ENCODE measurements at regions of chr19 and their contacts with region 1.

Region 1: DNA sequence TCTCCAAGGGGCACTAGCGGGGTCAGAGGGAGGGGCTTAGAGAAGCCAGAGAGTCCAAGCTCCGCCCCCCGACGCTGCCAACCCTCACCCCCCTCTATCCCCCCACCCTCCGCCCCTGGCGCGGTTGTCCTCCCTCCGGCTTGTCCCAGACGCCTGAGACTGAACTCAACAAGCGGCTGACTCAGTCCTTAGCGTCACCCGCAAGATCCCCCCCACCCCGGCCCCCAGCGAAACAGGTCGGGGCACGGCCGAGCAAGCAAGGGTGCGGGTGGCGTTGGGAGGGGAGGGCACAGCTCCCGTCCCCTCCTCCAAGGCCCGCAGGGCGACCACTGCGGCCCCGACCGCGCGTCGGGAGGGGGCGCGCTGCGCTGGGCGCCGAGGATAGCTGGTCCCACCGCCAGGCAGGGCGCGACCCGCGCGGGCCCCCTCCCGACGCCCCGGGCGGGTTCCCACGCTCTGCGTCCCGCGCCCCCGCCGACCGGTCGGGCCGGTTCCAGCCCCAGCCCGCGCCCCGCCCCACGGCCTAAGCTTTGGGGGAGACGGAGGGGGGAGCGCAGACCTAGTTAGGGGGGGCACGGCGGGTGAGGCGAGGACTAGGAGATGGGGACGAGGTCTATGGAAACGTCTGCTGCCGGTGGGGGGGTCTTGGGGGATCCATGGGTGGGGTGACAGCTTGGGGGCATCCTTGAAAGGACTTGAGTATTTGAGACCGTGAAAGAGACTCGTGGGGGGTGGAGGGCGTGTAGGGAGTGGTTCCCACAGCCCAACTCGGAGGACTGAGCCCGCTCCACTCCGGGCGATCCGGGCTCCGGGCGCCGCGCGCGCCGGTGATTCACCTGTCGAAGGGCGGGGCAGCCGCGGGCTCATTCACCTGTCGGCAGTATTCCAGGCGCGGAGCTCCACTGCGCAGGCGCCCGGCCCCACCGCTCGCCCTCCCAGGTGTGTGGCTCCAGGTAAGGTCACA is 5.1 kb downstream of the NOTCH3 start:
- DNase-seq: peak; percentile 92 to 98
- H3K4me3 ChIP-seq: peak overlapping the region; percentile 57
- H3K27ac ChIP-seq: peak overlapping the region; percentile 82
- H3K4me1 ChIP-seq: peaks cover 43% of the 10 kb centered on the region
- H3K27me3 ChIP-seq: no peaks in the 10 kb centered on the region
- CTCF ChIP-seq: peak; percentile 35; the same call in 1 of the 2 replicates

Region 2: DNA sequence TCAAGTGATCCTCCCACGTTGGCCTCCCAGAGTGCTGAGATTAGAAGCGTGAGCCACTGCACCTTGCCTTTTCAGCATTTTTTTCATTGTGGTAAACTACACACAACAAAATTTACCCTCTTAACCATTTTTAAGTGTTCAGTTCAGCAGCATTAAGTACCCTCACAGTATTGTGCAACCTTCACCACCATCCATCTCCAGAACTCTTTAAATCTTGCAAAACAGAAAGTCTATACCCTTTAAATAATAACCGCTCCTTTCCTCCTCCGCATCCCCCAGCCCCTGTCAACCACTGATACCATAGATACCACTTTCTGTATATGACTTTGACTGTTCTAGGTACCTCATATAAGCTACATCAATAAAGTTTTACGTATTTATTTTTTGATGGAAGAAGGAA is 167.2 kb before region 1 on chr19:
- CTCF ChIA-PET with region 1: no interaction called
- POLR2A ChIA-PET with region 1: no interaction called
- intact Hi-C with region 1: no loop called
- DNase-seq: no peak
- H3K4me3 ChIP-seq: no peak overlapping the region
- H3K27ac ChIP-seq: no peak overlapping the region
- H3K4me1 ChIP-seq: 0 out of 2 replicates have a peak, but pooled peaks cover 5% of the 10 kb centered on the region
- H3K27me3 ChIP-seq: no peaks in the 10 kb centered on the region
- CTCF ChIP-seq: no peak

Region 3: GRCh38 chr19:15234043-15234873 is 38.6 kb after region 1 on chr19:
- CTCF ChIA-PET with region 1: interaction called, 10 read pairs
- POLR2A ChIA-PET with region 1: interaction called, 11 read pairs
- intact Hi-C with region 1: loop called (anchors 1 kb)
- DNase-seq: peak; percentile 40 to 100
- H3K4me3 ChIP-seq: peak overlapping the region; percentile 56; the same call in 1 of the 2 replicates
- H3K27ac ChIP-seq: peak overlapping the region; percentile 97
- H3K4me1 ChIP-seq: peaks cover 37% of the 10 kb centered on the region
- H3K27me3 ChIP-seq: no peaks in the 10 kb centered on the region
- CTCF ChIP-seq: no peak

Measured in PC-9 (cell line).